GM10248 (cell line): ENCODE measurements at regions of chr16 and their contacts with region 1.

Region 1: DNA sequence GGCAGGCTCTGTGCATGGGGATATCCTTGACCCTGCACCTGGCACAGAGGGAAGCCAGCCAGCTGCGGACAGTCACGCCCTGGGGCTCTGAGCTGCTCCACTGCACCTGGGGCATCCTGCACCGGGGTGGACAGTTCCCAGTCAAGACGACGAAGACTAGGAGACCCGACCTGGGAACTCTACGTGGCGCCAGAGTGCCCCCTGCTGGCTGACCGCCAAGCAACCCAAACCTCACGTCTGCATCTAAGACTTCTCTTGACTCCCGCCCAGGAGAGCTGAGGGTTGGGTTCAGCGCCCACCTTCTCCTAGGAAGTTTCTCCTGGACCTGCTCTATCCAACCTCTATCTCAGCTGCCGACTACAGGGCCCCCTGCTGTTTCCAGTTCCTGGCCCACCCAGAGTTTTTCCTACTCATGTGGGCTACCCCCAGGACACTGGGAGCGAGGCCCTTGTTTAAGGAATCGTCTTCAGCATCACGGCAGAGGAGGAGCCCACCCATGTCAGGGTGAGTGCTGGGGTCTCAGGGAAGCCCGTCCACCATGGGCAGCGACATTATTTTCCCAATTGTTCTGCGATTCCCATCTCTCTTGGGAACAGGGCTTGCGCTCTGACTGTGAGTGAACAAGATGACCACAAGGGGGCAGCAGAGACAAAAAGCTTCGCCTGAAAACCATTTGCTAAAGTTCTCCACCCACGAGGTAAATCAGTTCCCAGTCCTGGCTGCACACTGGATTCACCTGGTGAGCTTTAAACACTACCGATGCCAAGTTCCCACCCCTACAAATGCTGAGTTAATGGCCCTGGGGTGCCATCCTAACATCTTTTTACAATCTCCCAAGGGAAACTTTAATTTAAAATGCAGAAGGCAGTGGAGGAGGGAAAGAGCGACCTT is 29.3 kb downstream of the TLE7 start:
- DNase-seq: peak; percentile 82
- CTCF ChIP-seq: peak; percentile 89

Region 2: DNA sequence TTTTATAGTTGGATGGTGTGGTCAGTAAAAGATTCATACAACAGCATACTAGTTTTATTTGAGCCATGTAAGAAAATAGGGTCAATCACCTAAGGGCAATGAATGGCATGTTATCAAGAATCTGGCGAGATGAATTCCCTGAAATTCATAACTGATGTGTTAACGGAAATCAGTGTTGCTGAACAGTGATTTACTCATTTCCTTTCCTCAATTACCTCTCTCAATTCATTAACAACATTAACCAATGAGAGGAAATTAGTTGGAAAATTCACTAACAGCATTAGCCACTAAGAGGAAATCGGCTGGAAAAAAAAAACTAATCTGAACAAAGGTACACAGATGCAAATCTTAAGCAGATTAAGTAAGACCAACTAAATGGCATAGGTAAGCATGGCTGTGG is 129.6 kb before region 1 on chr16:
- CTCF ChIA-PET with region 1: no interaction called
- POLR2A ChIA-PET with region 1: no interaction called
- DNase-seq: no peak
- CTCF ChIP-seq: no peak

Region 3: DNA sequence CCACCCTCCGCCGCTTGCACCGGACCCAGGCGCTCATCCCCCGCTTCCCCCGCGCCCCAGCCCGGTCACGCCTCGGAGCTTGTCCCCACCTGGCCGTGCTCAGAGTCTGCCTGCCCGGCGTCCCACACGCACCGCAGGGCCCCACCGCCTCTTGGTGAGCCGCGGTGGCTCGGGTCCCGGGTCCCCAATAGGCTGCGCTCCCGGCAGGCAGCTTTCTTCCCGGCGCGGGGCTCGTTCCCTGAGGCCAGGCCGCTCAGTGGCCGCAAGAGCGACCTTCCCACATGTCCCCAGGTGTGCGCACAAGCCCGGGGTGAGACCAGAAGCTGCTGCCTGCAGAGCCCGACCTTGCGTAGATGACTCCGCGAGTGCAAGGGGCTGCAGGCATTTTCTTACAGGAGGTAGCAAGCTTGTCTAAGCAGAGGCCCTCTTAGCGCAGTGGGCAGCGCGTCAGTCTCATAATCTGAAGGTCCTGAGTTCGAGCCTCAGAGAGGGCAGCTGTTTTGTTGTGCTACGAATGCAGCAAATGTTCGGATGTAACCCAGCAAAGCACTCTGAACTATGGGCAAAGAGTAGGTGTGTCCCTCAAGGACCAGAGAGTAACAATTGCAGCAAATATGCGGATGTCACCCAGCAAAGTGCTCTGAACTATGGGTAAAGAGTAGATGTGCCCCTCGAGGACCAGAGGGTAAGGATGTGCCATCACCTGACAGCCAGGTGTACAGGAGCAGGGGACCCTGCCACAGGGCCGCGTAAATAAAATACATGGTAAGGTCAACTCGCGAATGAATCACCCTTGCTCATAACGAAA is 13.8 kb after region 1 on chr16:
- CTCF ChIA-PET with region 1: interaction called, 93 read pairs
- POLR2A ChIA-PET with region 1: no interaction called
- DNase-seq: peak; percentile 46
- CTCF ChIP-seq: no peak

Region 4: DNA sequence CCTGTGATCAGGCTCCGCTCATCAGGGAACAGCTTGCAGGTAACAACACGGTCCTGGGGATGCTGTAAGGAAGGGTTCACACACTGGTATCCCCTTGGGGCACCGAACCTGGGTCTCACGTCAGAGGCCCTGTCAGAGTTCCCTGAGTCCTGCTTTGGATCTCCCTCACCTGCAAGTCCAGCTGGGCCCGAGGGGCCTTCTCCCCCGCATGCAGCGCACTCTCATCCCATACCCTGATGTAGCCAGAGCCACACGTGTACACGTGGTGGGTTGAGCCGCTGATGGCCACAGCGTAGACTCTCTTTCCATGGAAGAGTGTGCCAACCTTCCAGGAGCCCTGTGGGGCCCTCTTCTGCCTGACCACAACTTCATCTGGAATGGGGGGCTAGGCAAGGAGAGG is 19.4 kb after region 1 on chr16:
- CTCF ChIA-PET with region 1: interaction called, 93 read pairs
- POLR2A ChIA-PET with region 1: no interaction called
- DNase-seq: no peak
- CTCF ChIP-seq: no peak

Region 5: GRCh38 chr16:71484006-71484893 is 71.7 kb after region 1 on chr16:
- CTCF ChIA-PET with region 1: interaction called, 40 read pairs
- POLR2A ChIA-PET with region 1: no interaction called
- DNase-seq: peak; percentile 84
- CTCF ChIP-seq: no peak

Region 6: GRCh38 chr16:71537643-71538042 is 125.1 kb after region 1 on chr16:
- CTCF ChIA-PET with region 1: interaction called, 33 read pairs
- POLR2A ChIA-PET with region 1: no interaction called
- DNase-seq: peak; percentile 67
- CTCF ChIP-seq: peak; percentile 79